IMR-90 (cell line): ENCODE measurements at regions of chr14 and their contacts with region 1.

Region 1: DNA sequence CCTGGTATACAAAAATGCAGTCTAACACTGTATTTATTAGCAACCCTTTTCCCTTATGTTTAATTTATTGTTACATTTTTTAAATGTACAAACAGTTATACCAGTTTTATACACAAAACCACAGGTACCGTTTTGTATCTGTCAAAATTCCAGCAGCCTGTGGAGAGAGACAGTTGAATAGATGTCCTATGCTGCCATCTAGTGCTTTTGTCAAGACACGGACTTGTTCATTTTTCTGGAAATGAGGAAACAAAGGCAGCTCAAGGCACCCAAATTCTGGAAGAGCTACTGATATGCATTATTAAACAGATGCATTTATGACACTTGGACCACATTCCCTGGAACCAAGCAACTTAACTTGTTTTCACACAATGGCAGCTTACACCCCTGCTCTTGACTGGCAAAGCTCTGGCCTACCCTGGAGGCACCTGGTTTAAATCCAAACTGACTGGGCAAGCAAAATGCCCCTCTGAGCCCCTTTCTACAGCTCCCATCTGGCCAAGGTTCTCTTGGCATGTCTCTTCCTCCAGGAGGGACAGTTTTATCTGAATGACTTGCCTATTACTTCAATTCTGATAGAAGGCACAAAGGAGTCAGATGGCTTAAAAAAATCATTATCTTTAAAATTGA is 286.9 kb upstream of the PRKD1 start:
- DNase-seq: peak; percentile 85
- ATAC-seq: peak; percentile 77
- H3K4me3 ChIP-seq: no peak overlapping the region
- H3K27ac ChIP-seq: no peak overlapping the region
- H3K4me1 ChIP-seq: peaks cover 13% of the 10 kb centered on the region
- H3K27me3 ChIP-seq: no peaks in the 10 kb centered on the region
- CTCF ChIP-seq: peak; percentile 88
- POLR2A ChIP-seq: peak; percentile 35; the same call in 1 of the 2 replicates
- RAD21 ChIP-seq: peak; percentile 93

Region 2: GRCh38 chr14:28756884-28757570 is 1457.5 kb before region 1 on chr14:
- CTCF ChIA-PET with region 1: no interaction called
- POLR2A ChIA-PET with region 1: no interaction called
- dilution Hi-C with region 1: no loop called
- in situ Hi-C with region 1: loop called (anchors 10 kb)
- intact Hi-C with region 1: loop called (anchors 1 kb)
- DNase-seq: peak; percentile 54
- ATAC-seq: peak; percentile 59; the same call in 1 of the 2 replicates
- H3K4me3 ChIP-seq: peak overlapping the region; percentile 13; the same call in 1 of the 2 replicates
- H3K27ac ChIP-seq: no peak overlapping the region
- H3K4me1 ChIP-seq: no peaks in the 10 kb centered on the region
- H3K27me3 ChIP-seq: peaks cover 68% of the 10 kb centered on the region
- CTCF ChIP-seq: peak; percentile 68
- POLR2A ChIP-seq: no peak
- RAD21 ChIP-seq: peak; percentile 51

Region 3: DNA sequence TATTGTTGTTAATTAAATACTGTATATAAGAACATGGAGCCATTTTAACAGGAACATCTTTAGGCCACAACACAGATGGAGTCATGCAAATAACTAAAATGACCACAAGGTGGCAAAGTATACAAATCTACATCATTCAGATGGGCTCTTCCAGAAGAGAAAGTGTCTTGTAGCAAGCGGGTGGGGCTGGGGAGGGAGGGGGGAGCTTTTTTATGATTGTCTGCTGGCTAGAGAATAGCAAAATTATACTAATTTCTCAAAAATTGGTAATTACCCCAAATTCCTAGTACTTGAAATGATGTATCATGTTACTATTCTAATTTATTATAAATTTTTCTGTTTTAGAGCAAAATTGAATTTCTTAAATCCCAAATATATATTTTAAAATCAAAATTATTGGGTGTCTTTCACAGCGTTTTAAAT is 665.6 kb before region 1 on chr14:
- CTCF ChIA-PET with region 1: interaction called, 13 read pairs
- POLR2A ChIA-PET with region 1: no interaction called
- dilution Hi-C with region 1: no loop called
- in situ Hi-C with region 1: loop called (anchors 5 kb)
- intact Hi-C with region 1: loop called (anchors 1 kb)
- DNase-seq: peak; percentile 77
- ATAC-seq: peak; percentile 89
- H3K4me3 ChIP-seq: no peak overlapping the region
- H3K27ac ChIP-seq: no peak overlapping the region
- H3K4me1 ChIP-seq: no peaks in the 10 kb centered on the region
- H3K27me3 ChIP-seq: 0 out of 2 replicates have a peak, but pooled peaks cover 2% of the 10 kb centered on the region
- CTCF ChIP-seq: peak; percentile 67
- POLR2A ChIP-seq: no peak
- RAD21 ChIP-seq: peak; percentile 73

Region 4: DNA sequence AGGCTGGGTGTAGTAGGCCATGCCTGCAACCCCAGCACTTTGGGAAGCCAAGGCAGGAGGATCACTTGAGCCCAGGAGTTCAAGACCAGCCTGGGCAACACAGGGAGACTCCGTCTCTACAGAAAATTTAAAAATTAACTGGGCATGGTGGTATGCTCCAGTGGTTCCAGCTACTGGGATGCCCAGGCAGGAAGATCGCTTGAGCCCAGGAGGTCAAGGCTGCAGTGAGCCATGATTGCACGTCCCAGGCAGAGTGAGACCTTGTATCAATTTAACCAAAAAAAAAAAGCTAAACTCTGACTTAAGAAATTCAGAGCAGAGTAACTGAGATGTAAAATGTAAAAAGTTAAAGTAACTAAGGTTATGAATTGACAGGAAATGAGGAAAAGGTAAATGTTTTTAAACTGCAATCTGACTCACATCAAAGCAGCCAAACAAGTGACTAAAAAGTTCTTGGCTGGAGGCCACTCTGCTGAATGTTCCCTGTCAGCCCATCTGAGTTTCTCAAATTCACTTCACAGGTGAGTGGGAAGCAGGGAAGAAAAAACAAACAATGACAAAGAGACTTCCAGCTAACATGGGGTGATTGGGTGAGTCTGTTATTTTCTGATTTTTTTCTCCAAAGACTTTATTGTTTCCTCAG is 308.2 kb before region 1 on chr14:
- CTCF ChIA-PET with region 1: interaction called, 3 read pairs
- POLR2A ChIA-PET with region 1: no interaction called
- dilution Hi-C with region 1: no loop called
- in situ Hi-C with region 1: loop called (anchors 25 kb)
- intact Hi-C with region 1: no loop called
- DNase-seq: peak; percentile 71
- ATAC-seq: peak; percentile 40; the same call in 1 of the 2 replicates
- H3K4me3 ChIP-seq: no peak overlapping the region
- H3K27ac ChIP-seq: no peak overlapping the region
- H3K4me1 ChIP-seq: peaks cover 4% of the 10 kb centered on the region
- H3K27me3 ChIP-seq: no peaks in the 10 kb centered on the region
- CTCF ChIP-seq: no peak
- POLR2A ChIP-seq: no peak
- RAD21 ChIP-seq: no peak

Region 5: GRCh38 chr14:30005114-30005808 is 209.3 kb before region 1 on chr14:
- CTCF ChIA-PET with region 1: interaction called, 15 read pairs
- POLR2A ChIA-PET with region 1: no interaction called
- dilution Hi-C with region 1: no loop called
- in situ Hi-C with region 1: loop called (anchors 5 kb)
- intact Hi-C with region 1: loop called (anchors 1 kb)
- DNase-seq: peak; percentile 89
- ATAC-seq: peak; percentile 98
- H3K4me3 ChIP-seq: no peak overlapping the region
- H3K27ac ChIP-seq: no peak overlapping the region
- H3K4me1 ChIP-seq: no peaks in the 10 kb centered on the region
- H3K27me3 ChIP-seq: no peaks in the 10 kb centered on the region
- CTCF ChIP-seq: peak; percentile 87
- POLR2A ChIP-seq: no peak
- RAD21 ChIP-seq: peak; percentile 91